Right ventricle myocardium inferior (tissue), 1 donor: ENCODE measurements at regions of chr1 and their contacts with region 1.

Region 1: DNA sequence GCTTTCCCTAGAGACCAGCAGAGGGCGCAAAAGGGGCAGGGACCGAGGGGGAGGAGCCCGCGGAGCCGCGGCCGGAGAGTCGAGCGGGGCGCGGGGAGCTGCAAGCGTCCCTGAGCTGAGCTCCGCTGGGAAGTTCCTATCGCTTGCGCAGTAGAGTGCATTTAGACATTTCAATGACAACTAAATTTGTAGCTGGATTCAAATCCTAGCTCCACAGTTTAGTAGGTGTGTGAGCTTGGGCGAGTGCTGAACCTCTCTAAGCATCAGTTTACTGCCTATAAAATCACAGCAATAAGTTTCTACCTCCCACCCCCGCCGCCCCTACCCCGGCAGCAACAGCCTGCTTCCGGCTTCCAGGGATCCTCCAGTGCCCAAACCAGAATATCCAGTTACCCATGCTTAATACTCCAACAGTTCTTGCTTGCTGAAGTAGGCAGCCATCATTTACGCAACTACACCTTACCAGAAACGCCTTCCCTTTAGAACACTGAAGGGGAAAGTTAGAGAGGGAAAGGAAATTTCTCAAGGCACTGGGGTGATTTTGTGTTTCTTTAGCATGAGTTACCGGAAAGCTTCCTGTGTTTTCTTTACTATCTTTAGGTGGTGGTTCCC is 9.1 kb downstream of the TLR5 start:
- DNase-seq: peak; percentile 92
- ATAC-seq: peak; percentile 88

Region 2: DNA sequence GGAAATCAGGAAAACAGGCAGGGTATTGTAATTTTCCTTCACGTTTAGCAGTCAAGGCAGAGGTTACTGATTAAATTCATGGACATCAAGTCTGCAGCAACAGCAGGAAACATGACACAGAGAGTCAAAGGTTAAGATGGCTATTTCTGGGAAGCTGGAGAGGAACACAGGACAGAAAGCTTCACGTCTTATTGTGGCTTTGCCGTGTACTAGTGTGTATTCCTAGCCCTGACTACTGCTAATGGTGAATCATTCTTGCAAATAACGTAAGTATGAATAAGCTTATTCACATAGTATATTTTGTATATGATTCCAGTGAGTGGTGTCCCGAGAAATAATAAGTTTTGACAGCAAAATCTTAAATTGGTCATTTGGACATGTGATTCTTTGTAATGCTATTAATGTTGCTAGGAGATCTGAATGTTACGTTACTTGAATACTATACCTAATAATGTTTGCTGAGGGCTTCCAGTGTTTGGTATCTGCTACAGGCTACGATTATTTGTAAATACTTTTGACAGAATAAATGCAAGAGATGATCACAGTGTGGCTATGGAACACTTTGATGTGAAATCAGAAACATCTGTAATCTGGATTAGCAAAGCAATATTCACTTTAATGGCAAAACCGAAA is 241.7 kb before region 1 on chr1:
- intact Hi-C with region 1: no loop called
- DNase-seq: no peak
- ATAC-seq: no peak

Region 3: GRCh38 chr1:223022641-223023473 is 111.1 kb before region 1 on chr1:
- intact Hi-C with region 1: no loop called
- DNase-seq: no peak
- ATAC-seq: peak; percentile 60

Region 4: DNA sequence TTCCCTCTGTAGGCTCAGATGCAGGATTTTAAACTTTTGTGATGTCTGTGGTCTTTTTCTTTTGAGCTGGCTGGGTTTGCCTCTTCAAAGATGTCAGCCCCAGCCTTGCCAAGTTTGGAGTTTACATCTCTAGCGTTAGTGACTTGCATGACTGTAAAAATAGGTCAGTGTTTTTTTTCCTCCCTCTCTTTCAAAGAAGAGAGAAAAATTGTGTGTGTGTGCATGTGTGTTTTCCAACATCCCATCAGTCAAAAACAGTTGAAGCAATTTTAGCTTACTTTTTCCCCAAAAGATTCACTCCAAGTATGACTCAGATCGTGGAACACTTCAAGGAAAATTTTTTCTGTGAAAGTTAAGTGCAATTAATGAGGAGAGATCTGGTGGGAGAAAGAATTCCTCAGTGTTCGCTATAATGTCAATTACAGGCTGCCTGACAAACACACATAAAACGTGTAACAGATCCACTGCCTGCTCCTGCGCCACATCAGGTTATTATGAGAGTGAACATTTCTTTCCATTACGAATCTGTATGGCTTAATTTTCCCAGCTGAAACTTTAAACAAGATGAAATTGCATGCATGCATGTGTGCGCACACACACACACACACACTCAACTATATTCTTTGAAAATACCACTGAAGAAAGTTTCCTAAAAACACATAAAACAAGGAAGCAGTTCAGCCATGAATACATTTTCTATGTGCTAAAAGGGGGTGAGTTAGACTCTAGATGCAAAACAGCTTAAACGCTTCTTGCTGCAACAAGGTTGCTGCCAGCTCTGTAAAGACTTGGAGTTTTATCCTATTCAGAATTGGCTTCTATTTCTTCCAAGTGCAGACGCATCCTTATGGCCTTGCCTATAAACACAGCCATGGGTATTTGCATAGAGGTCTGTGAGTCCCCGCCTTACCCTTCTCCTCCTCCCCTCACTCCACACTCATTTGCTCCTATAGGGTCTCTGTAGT is 46.4 kb before region 1 on chr1:
- intact Hi-C with region 1: no loop called
- DNase-seq: no peak
- ATAC-seq: no peak

Region 5: DNA sequence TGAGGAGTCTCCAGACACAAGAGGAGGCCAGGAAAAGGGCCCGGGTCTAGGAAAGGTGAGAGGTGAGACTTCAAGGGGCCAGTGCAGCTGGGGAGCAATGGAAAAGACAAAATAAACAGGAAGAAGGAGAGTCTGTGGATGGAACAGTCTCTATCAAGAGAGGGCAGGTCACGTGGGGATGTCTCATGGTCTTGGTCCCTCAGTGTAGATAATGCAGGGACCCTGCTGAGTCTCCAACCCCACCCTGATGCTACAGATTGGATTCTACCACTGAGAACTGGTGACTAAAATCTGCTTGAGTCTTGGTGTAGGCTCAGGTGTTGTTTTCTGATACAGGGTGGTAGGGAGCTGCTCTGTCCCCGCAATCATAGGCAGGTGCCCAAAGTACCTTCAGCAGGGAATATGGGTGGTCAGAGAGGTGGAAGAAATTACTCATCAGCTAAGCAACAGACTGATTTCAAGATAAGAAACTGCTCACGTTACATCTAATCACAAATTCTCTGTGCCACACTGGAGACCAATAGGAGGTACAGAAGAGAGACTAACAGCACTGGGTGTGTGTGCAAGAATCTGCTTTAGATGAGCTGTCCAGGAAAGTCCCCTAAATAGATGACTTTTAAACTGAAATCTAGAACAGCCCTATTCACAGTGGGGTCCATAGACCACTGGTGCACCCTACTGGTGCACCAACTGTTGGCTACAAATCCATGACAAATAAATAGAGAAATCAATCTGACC is 110.6 kb after region 1 on chr1:
- intact Hi-C with region 1: loop called (anchors 2 kb)
- DNase-seq: no peak
- ATAC-seq: no peak

Region 6: GRCh38 chr1:223683586-223684487 is 549.9 kb after region 1 on chr1:
- intact Hi-C with region 1: loop called (anchors 5 kb)
- DNase-seq: no peak
- ATAC-seq: peak; percentile 23